Naive thymus-derived CD4-positive, alpha-beta T cell (primary cell): ENCODE measurements at regions of chr12 and their contacts with region 1.

Region 1: GRCh38 chr12:89019408-89020120 is 332.7 kb downstream of the DUSP6 start:
- DNase-seq: peak; percentile 27 to 75 (median 60)
- ATAC-seq: peak; percentile 96
- H3K4me3 ChIP-seq: peak overlapping the region; percentile 14
- H3K4me3 Mint-ChIP-seq: no peak overlapping the region
- H3K27ac ChIP-seq: no peak overlapping the region
- H3K27ac Mint-ChIP-seq: no peak overlapping the region
- H3K4me1 ChIP-seq: peaks cover 0 to 8% of the 10 kb centered on the region in 2 donors
- H3K4me1 Mint-ChIP-seq: peaks cover 0 to 29% (median 5%) of the 10 kb centered on the region in 7 donors
- H3K27me3 ChIP-seq: no peaks in the 10 kb centered on the region
- H3K27me3 Mint-ChIP-seq: peaks cover 0 to 13% (median 5%) of the 10 kb centered on the region in 5 donors

Region 2: DNA sequence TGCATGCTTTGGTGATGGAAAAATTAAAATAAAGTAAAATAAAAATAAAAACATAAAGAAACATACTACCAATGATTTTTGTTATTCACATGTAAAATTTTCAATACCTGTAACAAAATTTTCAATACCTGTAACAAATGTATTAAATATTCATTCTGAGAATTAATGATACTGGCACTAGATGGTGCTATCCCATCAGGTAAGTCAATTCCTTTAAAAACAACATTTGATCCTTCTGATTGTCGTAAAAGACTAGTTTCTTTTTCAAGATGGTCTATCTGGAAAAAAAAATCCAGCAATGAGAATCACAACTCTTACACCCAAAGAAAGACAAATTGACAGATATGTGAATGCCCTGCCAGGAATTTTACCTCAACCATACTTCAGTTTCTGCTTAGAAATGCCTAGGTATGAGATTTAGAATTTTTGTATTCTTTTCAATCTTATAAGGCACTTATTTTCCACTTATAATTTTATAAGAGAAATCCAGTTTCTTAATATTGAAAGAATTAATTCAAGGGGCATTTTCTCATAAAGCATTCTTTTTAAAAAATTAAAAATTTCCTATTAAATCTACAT is 908.4 kb before region 1 on chr12:
- CTCF ChIA-PET with region 1: no interaction called
- POLR2A ChIA-PET with region 1: no interaction called
- intact Hi-C with region 1: loop called in 1 of 2 experiments (anchors 2 kb)
- DNase-seq: peak in 4 of 9 donors; percentile 6 to 22 (median 17)
- ATAC-seq: no peak
- H3K4me3 ChIP-seq: no peak overlapping the region
- H3K4me3 Mint-ChIP-seq: peak overlapping the region in 3 of 10 donors; percentile 30 to 46 (median 45)
- H3K27ac ChIP-seq: no peak overlapping the region
- H3K27ac Mint-ChIP-seq: peak overlapping the region in 1 of 9 donors; percentile 52
- H3K4me1 ChIP-seq: no peaks in the 10 kb centered on the region
- H3K4me1 Mint-ChIP-seq: peaks cover 0 to 4% (median 0%) of the 10 kb centered on the region in 7 donors
- H3K27me3 ChIP-seq: no peaks in the 10 kb centered on the region
- H3K27me3 Mint-ChIP-seq: no peaks in the 10 kb centered on the region

Region 3: DNA sequence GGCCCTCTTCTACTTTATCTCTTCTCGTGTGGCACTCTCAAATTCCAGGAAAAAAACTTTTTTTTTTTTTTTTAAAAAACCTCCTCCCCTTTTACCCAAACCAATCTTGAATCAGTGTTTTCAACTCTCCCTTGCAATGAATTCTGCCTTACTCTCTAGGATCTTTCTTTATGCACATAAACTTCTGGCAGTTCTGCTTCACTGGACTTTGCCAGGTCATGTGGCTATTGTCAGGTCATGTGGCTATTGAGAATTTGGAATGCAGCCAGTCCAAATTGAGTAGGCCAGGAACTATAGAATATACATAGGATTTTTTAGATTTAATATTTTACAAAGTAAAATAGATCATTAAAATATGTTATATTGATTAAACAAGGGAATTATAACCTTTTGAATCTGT is 659.2 kb before region 1 on chr12:
- CTCF ChIA-PET with region 1: no interaction called
- POLR2A ChIA-PET with region 1: no interaction called
- intact Hi-C with region 1: no loop called
- DNase-seq: no peak
- ATAC-seq: no peak
- H3K4me3 ChIP-seq: no peak overlapping the region
- H3K4me3 Mint-ChIP-seq: no peak overlapping the region
- H3K27ac ChIP-seq: no peak overlapping the region
- H3K27ac Mint-ChIP-seq: peak overlapping the region in 1 of 9 donors; percentile 32
- H3K4me1 ChIP-seq: no peaks in the 10 kb centered on the region
- H3K4me1 Mint-ChIP-seq: no peaks in the 10 kb centered on the region
- H3K27me3 ChIP-seq: no peaks in the 10 kb centered on the region
- H3K27me3 Mint-ChIP-seq: no peaks in the 10 kb centered on the region

Region 4: GRCh38 chr12:89244536-89244935 is 225.0 kb after region 1 on chr12:
- CTCF ChIA-PET with region 1: no interaction called
- POLR2A ChIA-PET with region 1: no interaction called
- intact Hi-C with region 1: loop called (anchors 1 kb)
- DNase-seq: peak in 7 of 9 donors; percentile 28 to 67 (median 56)
- ATAC-seq: peak; percentile 76
- H3K4me3 ChIP-seq: peak overlapping the region; percentile 23
- H3K4me3 Mint-ChIP-seq: peak overlapping the region; percentile 18 to 64 (median 52)
- H3K27ac ChIP-seq: no peak overlapping the region
- H3K27ac Mint-ChIP-seq: peak overlapping the region; percentile 2 to 93 (median 60)
- H3K4me1 ChIP-seq: peaks cover 24 to 28% of the 10 kb centered on the region in 2 donors
- H3K4me1 Mint-ChIP-seq: peaks cover 32 to 56% (median 48%) of the 10 kb centered on the region in 7 donors
- H3K27me3 ChIP-seq: no peaks in the 10 kb centered on the region
- H3K27me3 Mint-ChIP-seq: no peaks in the 10 kb centered on the region

Region 5: GRCh38 chr12:89524541-89525285 is 505.1 kb after region 1 on chr12 and contains the start of gene GALNT4:
- CTCF ChIA-PET with region 1: interaction called, 15 read pairs
- POLR2A ChIA-PET with region 1: interaction called, 3 read pairs
- intact Hi-C with region 1: loop called (anchors 1 kb)
- DNase-seq: peak; percentile 61 to 78 (median 74)
- ATAC-seq: peak; percentile 87
- H3K4me3 ChIP-seq: peak within 1 kb of the TSS; percentile 90
- H3K4me3 Mint-ChIP-seq: peak within 1 kb of the TSS; percentile 87 to 98 (median 96)
- H3K27ac ChIP-seq: peak within 1 kb of the TSS; percentile 77
- H3K27ac Mint-ChIP-seq: peak within 1 kb of the TSS; percentile 67 to 96 (median 89)
- H3K4me1 ChIP-seq: peaks cover 30 to 35% of the 10 kb centered on the region in 2 donors
- H3K4me1 Mint-ChIP-seq: peaks cover 30 to 66% (median 55%) of the 10 kb centered on the region in 7 donors
- H3K27me3 ChIP-seq: no peaks in the 10 kb centered on the region
- H3K27me3 Mint-ChIP-seq: no peaks in the 10 kb centered on the region
- total RNA-seq, gene GALNT4: 6.0 to 14.5 (median 9.9) TPM

Region 6: DNA sequence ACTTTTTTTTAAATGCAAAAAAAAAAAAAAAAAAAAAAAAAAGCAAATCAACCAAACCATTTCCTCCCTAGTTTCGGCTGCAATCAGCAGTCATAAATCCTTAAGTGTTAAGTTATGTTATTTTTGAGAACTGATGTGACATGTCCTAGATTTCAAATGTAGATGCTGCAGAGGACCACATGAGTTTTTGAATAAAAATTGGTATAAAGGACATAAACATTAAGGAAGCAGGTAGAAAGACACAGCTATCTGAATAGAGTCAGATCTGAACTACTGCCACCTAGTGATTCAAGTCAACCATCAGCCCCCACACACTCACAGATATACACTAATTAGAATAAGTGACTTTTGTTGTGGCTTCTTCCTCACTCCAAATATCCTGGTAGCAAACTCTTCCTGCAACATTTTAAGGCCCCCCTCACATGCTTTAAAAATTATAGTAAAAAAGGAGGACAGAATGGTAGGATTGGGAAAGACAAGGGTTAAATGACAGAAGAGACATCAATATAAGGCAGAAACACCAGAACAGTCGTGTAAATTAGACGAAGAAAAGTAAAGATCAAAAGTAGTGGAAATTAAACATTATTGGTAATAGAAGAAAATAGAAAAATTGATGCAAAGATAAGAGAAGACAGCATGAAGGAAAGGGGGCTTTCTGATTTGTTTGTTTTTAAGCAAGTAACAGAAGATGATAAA is 1083.5 kb after region 1 on chr12:
- CTCF ChIA-PET with region 1: no interaction called
- POLR2A ChIA-PET with region 1: no interaction called
- intact Hi-C with region 1: loop called (anchors 2 to 5 kb)
- DNase-seq: peak in 6 of 9 donors; percentile 17 to 56 (median 44)
- ATAC-seq: peak; percentile 79
- H3K4me3 ChIP-seq: no peak overlapping the region
- H3K4me3 Mint-ChIP-seq: peak overlapping the region in 8 of 10 donors; percentile 47 to 75 (median 70)
- H3K27ac ChIP-seq: no peak overlapping the region
- H3K27ac Mint-ChIP-seq: peak overlapping the region in 4 of 9 donors; percentile 38 to 63 (median 48)
- H3K4me1 ChIP-seq: no peaks in the 10 kb centered on the region
- H3K4me1 Mint-ChIP-seq: peaks cover 4 to 12% (median 6%) of the 10 kb centered on the region in 7 donors
- H3K27me3 ChIP-seq: no peaks in the 10 kb centered on the region
- H3K27me3 Mint-ChIP-seq: peaks cover 4 to 15% (median 11%) of the 10 kb centered on the region in 5 donors

Region 7: GRCh38 chr12:90959538-90960139 is 1940.1 kb after region 1 on chr12:
- CTCF ChIA-PET with region 1: interaction called, 4 read pairs
- POLR2A ChIA-PET with region 1: no interaction called
- intact Hi-C with region 1: loop called (anchors 2 to 5 kb)
- DNase-seq: peak in 5 of 9 donors; percentile 13 to 28 (median 20)
- ATAC-seq: peak; percentile 60
- H3K4me3 ChIP-seq: no peak overlapping the region
- H3K4me3 Mint-ChIP-seq: no peak overlapping the region
- H3K27ac ChIP-seq: no peak overlapping the region
- H3K27ac Mint-ChIP-seq: no peak overlapping the region
- H3K4me1 ChIP-seq: no peaks in the 10 kb centered on the region
- H3K4me1 Mint-ChIP-seq: peaks cover 0 to 2% (median 0%) of the 10 kb centered on the region in 7 donors
- H3K27me3 ChIP-seq: peaks cover 0 to 3% of the 10 kb centered on the region in 2 donors
- H3K27me3 Mint-ChIP-seq: peaks cover 0 to 9% (median 0%) of the 10 kb centered on the region in 5 donors